Naive thymus-derived CD4-positive, alpha-beta T cell (primary cell): ENCODE measurements at regions of chr15 and their contacts with region 1.

Region 1: DNA sequence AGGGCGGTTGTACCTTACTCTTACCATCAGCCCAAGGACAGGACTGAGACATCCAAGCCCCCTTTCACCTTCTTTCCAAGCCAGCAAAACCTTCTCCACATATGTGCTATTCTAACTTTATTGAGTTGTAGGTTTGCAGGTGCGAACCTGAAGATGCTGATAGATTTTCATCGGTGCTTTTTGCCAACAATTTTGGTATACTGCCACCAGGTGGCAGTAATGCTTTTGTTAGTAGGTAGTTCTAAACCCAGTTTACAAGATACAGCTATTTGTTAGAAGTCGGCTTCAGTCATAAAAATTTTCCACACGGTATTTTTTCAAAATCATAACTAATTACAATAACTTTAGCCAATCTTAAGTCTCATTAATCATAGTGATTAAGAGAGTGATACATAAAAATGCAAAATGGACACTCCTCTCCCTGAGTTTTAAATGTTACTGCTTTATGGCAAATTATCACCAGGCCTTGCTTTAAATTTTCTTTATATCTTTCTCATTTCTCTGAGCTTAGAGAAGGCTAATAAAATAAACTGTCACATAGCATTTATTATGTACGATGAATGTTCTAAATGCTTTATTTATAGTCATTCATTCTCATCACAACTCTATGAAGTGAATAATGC is 636 bp downstream of the TBC1D21 start:
- DNase-seq: peak in 7 of 9 donors; percentile 6 to 52 (median 36)
- ATAC-seq: peak; percentile 48
- H3K4me3 ChIP-seq: no peak overlapping the region
- H3K4me3 Mint-ChIP-seq: no peak overlapping the region
- H3K27ac ChIP-seq: no peak overlapping the region
- H3K27ac Mint-ChIP-seq: no peak overlapping the region
- H3K4me1 ChIP-seq: no peaks in the 10 kb centered on the region
- H3K4me1 Mint-ChIP-seq: peaks cover 0 to 3% (median 0%) of the 10 kb centered on the region in 7 donors
- H3K27me3 ChIP-seq: no peaks in the 10 kb centered on the region
- H3K27me3 Mint-ChIP-seq: peaks cover 20 to 59% (median 49%) of the 10 kb centered on the region in 5 donors

Region 2: GRCh38 chr15:73908030-73908821 is 34.2 kb after region 1 on chr15:
- CTCF ChIA-PET with region 1: interaction called, 20 read pairs
- POLR2A ChIA-PET with region 1: no interaction called
- intact Hi-C with region 1: loop called (anchors 1 kb)
- DNase-seq: peak; percentile 34 to 78 (median 56)
- ATAC-seq: peak; percentile 96
- H3K4me3 ChIP-seq: no peak overlapping the region
- H3K4me3 Mint-ChIP-seq: no peak overlapping the region
- H3K27ac ChIP-seq: no peak overlapping the region
- H3K27ac Mint-ChIP-seq: no peak overlapping the region
- H3K4me1 ChIP-seq: no peaks in the 10 kb centered on the region
- H3K4me1 Mint-ChIP-seq: peaks cover 0 to 21% (median 0%) of the 10 kb centered on the region in 7 donors
- H3K27me3 ChIP-seq: no peaks in the 10 kb centered on the region
- H3K27me3 Mint-ChIP-seq: no peaks in the 10 kb centered on the region

Region 3: DNA sequence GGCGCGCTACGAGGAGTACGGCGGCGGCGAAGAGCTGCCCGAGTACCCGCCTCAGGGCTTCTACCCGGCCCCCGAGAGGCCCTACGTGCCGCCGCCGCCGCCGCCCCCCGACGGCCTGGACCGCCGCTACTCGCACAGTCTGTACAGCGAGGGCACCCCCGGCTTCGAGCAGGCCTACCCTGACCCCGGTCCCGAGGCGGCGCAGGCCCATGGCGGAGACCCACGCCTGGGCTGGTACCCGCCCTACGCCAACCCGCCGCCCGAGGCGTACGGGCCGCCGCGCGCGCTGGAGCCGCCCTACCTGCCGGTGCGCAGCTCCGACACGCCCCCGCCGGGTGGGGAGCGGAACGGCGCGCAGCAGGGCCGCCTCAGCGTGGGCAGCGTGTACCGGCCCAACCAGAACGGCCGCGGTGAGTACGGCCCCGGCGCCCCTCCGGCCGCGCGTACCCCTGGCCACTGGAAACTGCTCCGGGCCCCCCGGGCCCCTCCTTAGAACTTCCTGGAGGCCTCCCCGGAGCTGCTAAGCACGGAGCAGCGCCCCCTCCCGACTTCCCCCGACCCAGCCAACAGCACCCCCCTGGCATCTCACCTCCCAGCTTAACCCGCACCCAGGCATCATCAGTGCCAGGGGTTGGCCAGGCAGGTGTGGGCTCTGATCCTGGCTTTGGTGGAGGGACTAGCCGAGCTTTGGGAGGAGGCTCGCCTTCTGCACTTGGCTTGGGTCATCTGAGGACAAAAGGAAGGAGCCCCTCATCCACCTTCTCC is 53.7 kb after region 1 on chr15:
- CTCF ChIA-PET with region 1: interaction called, 6 read pairs
- POLR2A ChIA-PET with region 1: no interaction called
- intact Hi-C with region 1: loop called in 1 of 2 experiments (anchors 5 kb)
- DNase-seq: peak; percentile 69 to 86 (median 84)
- ATAC-seq: peak; percentile 93
- H3K4me3 ChIP-seq: peak overlapping the region; percentile 74
- H3K4me3 Mint-ChIP-seq: peak overlapping the region; percentile 62 to 83 (median 74)
- H3K27ac ChIP-seq: peak overlapping the region; percentile 77
- H3K27ac Mint-ChIP-seq: peak overlapping the region; percentile 26 to 69 (median 51)
- H3K4me1 ChIP-seq: peaks cover 15 to 21% of the 10 kb centered on the region in 2 donors
- H3K4me1 Mint-ChIP-seq: peaks cover 25 to 55% (median 39%) of the 10 kb centered on the region in 7 donors
- H3K27me3 ChIP-seq: no peaks in the 10 kb centered on the region
- H3K27me3 Mint-ChIP-seq: peaks cover 0 to 6% (median 0%) of the 10 kb centered on the region in 5 donors

Region 4: DNA sequence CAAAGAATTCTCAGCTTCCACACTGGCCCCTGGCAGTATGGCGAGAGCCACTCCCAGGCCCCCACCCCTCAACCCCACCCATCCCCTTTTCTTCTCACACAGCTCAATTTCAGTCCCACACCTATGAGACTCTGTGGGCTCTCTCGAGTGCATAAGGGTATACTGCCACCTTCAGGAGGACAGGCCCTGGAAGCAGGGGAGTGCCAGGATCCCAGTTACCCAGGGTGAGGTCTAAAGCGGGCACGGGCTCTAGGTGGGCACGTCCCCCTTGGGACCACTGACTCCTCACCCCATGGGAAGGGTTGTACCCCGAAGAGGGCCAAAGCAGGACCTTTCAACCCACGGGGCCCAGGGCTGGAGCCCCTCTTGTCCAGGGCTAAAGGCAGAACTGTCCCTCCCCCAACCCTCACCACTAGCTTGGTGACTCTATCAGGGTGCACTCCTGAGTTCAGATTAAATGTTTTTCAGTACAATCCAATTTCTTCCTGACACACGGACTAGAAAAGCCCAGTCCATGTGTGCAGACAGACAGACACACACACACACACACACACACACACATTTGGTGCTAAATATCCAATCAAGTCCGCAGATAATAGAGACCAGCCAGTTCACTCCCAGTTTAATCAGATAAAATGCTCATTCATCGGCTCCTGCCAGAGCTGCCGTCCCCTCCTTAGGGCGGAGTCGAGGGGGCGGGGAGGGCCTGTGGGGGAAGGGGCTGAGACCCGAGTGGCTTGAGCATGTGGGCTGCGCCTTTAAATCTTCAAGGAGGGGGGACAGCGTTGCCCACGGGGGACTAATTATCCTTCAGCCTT is 434.0 kb after region 1 on chr15:
- CTCF ChIA-PET with region 1: no interaction called
- POLR2A ChIA-PET with region 1: no interaction called
- intact Hi-C with region 1: loop called in 1 of 2 experiments (anchors 5 kb)
- DNase-seq: peak in 2 of 9 donors; percentile 18 to 28
- ATAC-seq: peak; percentile 64
- H3K4me3 ChIP-seq: no peak overlapping the region
- H3K4me3 Mint-ChIP-seq: no peak overlapping the region
- H3K27ac ChIP-seq: no peak overlapping the region
- H3K27ac Mint-ChIP-seq: no peak overlapping the region
- H3K4me1 ChIP-seq: no peaks in the 10 kb centered on the region
- H3K4me1 Mint-ChIP-seq: peaks cover 0 to 1% (median 0%) of the 10 kb centered on the region in 7 donors
- H3K27me3 ChIP-seq: no peaks in the 10 kb centered on the region
- H3K27me3 Mint-ChIP-seq: peaks cover 17 to 31% (median 25%) of the 10 kb centered on the region in 5 donors